ENCODE measurements at regions of chr4 and their contacts with region 1.

Region 1: DNA sequence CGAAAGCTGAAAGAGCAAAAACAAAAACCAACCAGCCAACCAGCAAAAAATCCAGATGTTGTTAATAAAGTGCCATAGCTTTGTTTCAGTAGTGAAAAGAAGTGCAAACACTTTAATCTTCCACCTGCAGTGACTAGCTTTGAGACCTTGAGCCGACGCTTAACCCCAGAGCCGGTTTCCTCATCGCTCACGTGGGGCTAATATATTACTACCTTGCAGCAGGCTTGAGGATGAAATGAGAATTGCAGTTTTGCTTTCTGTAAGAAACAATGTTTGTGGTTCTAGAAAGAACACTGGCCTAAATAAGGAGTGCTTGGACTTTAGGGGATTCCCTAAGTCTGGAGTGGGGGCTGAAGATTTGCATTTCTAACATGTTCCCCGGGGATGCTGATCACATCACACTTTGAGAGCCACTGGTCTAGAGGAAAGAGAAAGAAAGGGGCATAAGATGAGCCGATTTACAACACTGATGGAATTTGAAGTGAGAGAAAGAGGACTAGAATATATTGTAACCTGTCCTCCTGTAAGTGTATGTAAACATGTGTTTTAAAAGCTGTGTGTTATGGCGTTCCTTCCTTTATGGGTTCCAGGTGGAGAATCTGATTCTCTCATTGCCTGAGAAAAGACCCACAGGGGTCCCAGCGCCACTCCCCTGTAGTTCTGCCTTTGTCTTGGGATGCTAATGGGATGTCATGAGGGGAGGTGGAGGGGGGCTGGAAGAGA is 1.4 kb downstream of the FGF2 start:
- DNase-seq: no peak
- H3K4me3 Mint-ChIP-seq: peak overlapping the region; percentile 85
- H3K27ac Mint-ChIP-seq: peak overlapping the region; percentile 61
- H3K4me1 Mint-ChIP-seq: peaks cover 18% of the 10 kb centered on the region
- H3K27me3 Mint-ChIP-seq: peaks cover 76% of the 10 kb centered on the region

Region 2: GRCh38 chr4:122666527-122667245 is 161.4 kb before region 1 on chr4:
- intact Hi-C with region 1: loop called (anchors 5 kb)
- DNase-seq: no peak
- H3K4me3 Mint-ChIP-seq: peak overlapping the region; percentile 60
- H3K27ac Mint-ChIP-seq: peak overlapping the region; percentile 78
- H3K4me1 Mint-ChIP-seq: peaks cover 70% of the 10 kb centered on the region
- H3K27me3 Mint-ChIP-seq: no peaks in the 10 kb centered on the region

Region 3: DNA sequence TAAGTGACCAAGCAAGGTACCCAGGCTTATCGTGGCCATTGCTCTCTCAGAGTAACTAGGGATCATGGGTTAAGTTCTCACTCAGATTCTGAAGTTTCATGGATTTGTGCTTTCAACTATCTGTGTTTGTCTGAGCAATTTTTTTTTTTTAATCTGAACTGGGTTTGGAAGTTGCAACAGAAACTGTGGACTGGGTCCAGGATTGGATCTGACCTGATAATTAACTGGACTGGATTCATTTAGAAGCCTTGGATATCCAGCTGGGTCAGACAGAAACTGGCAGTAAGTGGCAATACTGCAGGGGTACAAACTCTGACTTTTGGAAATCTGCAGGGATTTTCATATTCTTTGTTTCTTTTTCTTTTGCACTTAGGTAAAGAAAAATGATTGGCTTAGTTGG is 40.1 kb before region 1 on chr4:
- intact Hi-C with region 1: loop called (anchors 5 kb)
- DNase-seq: no peak
- H3K4me3 Mint-ChIP-seq: no peak overlapping the region
- H3K27ac Mint-ChIP-seq: no peak overlapping the region
- H3K4me1 Mint-ChIP-seq: peaks cover 26% of the 10 kb centered on the region
- H3K27me3 Mint-ChIP-seq: peaks cover 1% of the 10 kb centered on the region

Region 4: DNA sequence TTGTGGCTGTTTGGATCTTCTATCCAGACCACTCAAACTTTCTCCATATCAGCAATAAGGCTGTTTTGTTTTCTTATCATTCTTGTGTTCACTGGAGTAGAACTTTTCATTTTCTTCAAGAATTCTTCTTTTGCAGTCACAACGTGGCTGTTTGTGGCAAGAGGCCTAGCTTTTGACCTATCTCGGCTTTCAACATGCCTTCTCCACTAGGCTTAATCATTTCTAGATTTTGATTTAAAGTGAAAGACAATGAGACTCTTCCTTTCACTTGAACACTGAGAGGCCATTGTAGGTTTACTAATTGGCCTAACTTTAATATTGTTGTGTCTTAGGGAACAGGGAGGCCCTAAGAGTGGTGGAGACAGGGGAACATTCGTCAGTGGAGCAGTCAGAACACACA is 17.7 kb after region 1 on chr4:
- intact Hi-C with region 1: loop called (anchors 1 kb)
- DNase-seq: no peak
- H3K4me3 Mint-ChIP-seq: no peak overlapping the region
- H3K27ac Mint-ChIP-seq: peak overlapping the region; percentile 33
- H3K4me1 Mint-ChIP-seq: peaks cover 12% of the 10 kb centered on the region
- H3K27me3 Mint-ChIP-seq: peaks cover 5% of the 10 kb centered on the region